ENCODE measurements at regions of chr22 and their contacts with region 1.

Region 1: GRCh38 chr22:21862386-21863245 is 4.8 kb downstream of the MAPK1 start:
- DNase-seq: no peak
- ATAC-seq: no peak
- H3K4me3 ChIP-seq: no peak overlapping the region
- H3K4me3 Mint-ChIP-seq: peak overlapping the region; percentile 15
- H3K27ac ChIP-seq: no peak overlapping the region
- H3K27ac Mint-ChIP-seq: peak overlapping the region; percentile 53
- H3K4me1 ChIP-seq: peaks cover 77% of the 10 kb centered on the region
- H3K4me1 Mint-ChIP-seq: peaks cover 78% of the 10 kb centered on the region
- H3K27me3 ChIP-seq: no peaks in the 10 kb centered on the region
- H3K27me3 Mint-ChIP-seq: no peaks in the 10 kb centered on the region
- CTCF ChIP-seq: no peak

Region 2: DNA sequence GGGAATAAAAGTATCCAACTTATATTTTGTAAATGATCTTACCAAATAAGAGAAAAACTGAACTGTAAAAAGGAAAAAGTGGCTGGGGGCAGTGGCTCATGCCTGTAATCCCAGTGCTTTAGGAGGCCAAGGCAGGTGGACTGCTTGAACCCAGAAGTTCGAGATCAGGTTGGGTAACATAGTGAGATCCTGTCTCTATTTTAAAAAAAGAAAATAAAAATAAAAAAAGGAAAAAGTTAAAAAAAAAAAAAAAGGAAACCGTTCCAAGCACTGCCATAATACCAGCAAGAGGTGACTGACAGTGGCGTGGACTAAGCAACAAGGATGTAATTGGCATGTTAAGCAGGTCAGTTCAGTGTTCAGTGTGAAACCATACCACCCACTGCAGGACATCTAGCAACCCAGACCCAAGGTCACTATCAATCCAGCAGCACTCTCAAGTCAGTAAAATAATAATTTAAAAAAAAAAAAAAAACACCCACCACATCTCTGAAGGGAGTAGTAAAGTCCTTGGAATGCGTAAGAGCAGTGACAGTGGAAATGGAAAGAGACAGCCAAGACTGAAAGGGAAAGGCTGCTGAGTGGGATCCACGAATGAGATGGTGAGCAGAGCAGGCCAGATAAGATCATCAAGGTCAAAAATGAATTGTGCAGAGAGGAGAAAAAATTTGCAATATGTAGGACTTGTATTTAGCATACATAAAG is 38.7 kb before region 1 on chr22:
- CTCF ChIA-PET with region 1: no interaction called
- POLR2A ChIA-PET with region 1: no interaction called
- intact Hi-C with region 1: no loop called
- DNase-seq: no peak
- ATAC-seq: no peak
- H3K4me3 ChIP-seq: no peak overlapping the region
- H3K4me3 Mint-ChIP-seq: no peak overlapping the region
- H3K27ac ChIP-seq: no peak overlapping the region
- H3K27ac Mint-ChIP-seq: peak overlapping the region; percentile 74
- H3K4me1 ChIP-seq: peaks cover 26% of the 10 kb centered on the region
- H3K4me1 Mint-ChIP-seq: peaks cover 74% of the 10 kb centered on the region
- H3K27me3 ChIP-seq: no peaks in the 10 kb centered on the region
- H3K27me3 Mint-ChIP-seq: no peaks in the 10 kb centered on the region
- CTCF ChIP-seq: no peak

Region 3: GRCh38 chr22:21849489-21849888 is 13.1 kb before region 1 on chr22:
- CTCF ChIA-PET with region 1: no interaction called
- POLR2A ChIA-PET with region 1: interaction called, 3 read pairs
- intact Hi-C with region 1: loop called in 1 of 2 experiments (anchors 1 kb)
- DNase-seq: no peak
- ATAC-seq: no peak
- H3K4me3 ChIP-seq: no peak overlapping the region
- H3K4me3 Mint-ChIP-seq: no peak overlapping the region
- H3K27ac ChIP-seq: no peak overlapping the region
- H3K27ac Mint-ChIP-seq: no peak overlapping the region
- H3K4me1 ChIP-seq: peaks cover 8% of the 10 kb centered on the region
- H3K4me1 Mint-ChIP-seq: peaks cover 77% of the 10 kb centered on the region
- H3K27me3 ChIP-seq: no peaks in the 10 kb centered on the region
- H3K27me3 Mint-ChIP-seq: no peaks in the 10 kb centered on the region
- CTCF ChIP-seq: no peak

Measured in CD8-positive, alpha-beta T cell (primary cell).